MCF 10A (cell line): ENCODE measurements at regions of chr7 and their contacts with region 1.

Region 1: DNA sequence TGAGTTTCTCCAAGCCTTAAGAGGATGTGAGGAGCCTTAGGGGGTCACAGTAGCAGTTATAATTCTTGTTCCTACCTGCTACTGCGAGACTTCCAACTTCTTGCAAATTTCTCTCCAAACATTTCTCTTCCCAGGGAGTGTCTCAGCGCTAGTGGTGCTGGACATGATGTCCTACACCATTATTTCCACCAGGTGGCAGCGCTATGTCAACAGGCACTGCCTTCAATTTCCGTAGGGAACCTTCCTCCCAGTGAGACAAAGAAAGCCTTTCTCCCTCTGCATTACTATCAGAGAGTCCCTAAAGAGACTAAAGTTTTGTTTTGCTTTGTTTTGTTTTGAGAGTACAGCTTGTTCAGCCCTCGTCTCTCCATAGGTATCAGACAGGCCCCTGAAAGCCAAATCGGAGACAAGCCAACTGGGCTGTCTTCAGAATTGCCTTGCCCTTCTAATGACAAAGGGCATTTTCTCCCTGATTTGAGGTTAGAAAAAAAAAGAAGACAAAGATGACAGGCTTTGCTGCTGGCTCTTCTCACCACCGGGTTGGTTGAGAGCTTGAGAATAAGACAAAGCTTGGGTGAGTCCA is 44.2 kb upstream of the GGCT start:
- DNase-seq: peak; percentile 84
- H3K4me3 Mint-ChIP-seq: no peak overlapping the region
- H3K27ac Mint-ChIP-seq: peak overlapping the region; percentile 92
- H3K4me1 Mint-ChIP-seq: peaks cover 32% of the 10 kb centered on the region
- H3K27me3 Mint-ChIP-seq: no peaks in the 10 kb centered on the region
- CTCF ChIP-seq: peak; percentile 78

Region 2: GRCh38 chr7:30478349-30479201 is 70.3 kb before region 1 on chr7 and contains the start of gene NOD1:
- CTCF ChIA-PET with region 1: interaction called, 3 read pairs
- POLR2A ChIA-PET with region 1: interaction called, 12 read pairs
- intact Hi-C with region 1: no loop called
- DNase-seq: peak; percentile 73
- H3K4me3 Mint-ChIP-seq: peak within 1 kb of the TSS; percentile 86
- H3K27ac Mint-ChIP-seq: peak within 1 kb of the TSS; percentile 77
- H3K4me1 Mint-ChIP-seq: peaks cover 6% of the 10 kb centered on the region
- H3K27me3 Mint-ChIP-seq: no peaks in the 10 kb centered on the region
- CTCF ChIP-seq: no peak
- total RNA-seq, gene NOD1: 3.8 and 4.8 TPM in 2 replicates

Region 3: GRCh38 chr7:30504347-30505173 is 44.3 kb before region 1 on chr7 and contains the start of gene GGCT:
- CTCF ChIA-PET with region 1: interaction called, 71 read pairs
- POLR2A ChIA-PET with region 1: interaction called, 12 read pairs
- intact Hi-C with region 1: no loop called
- DNase-seq: peak; percentile 99
- H3K4me3 Mint-ChIP-seq: peak within 1 kb of the TSS; percentile 83
- H3K27ac Mint-ChIP-seq: peak within 1 kb of the TSS; percentile 77
- H3K4me1 Mint-ChIP-seq: peaks cover 30% of the 10 kb centered on the region
- H3K27me3 Mint-ChIP-seq: no peaks in the 10 kb centered on the region
- CTCF ChIP-seq: no peak
- total RNA-seq, gene GGCT: 48.3 and 64.8 TPM in 2 replicates

Region 4: DNA sequence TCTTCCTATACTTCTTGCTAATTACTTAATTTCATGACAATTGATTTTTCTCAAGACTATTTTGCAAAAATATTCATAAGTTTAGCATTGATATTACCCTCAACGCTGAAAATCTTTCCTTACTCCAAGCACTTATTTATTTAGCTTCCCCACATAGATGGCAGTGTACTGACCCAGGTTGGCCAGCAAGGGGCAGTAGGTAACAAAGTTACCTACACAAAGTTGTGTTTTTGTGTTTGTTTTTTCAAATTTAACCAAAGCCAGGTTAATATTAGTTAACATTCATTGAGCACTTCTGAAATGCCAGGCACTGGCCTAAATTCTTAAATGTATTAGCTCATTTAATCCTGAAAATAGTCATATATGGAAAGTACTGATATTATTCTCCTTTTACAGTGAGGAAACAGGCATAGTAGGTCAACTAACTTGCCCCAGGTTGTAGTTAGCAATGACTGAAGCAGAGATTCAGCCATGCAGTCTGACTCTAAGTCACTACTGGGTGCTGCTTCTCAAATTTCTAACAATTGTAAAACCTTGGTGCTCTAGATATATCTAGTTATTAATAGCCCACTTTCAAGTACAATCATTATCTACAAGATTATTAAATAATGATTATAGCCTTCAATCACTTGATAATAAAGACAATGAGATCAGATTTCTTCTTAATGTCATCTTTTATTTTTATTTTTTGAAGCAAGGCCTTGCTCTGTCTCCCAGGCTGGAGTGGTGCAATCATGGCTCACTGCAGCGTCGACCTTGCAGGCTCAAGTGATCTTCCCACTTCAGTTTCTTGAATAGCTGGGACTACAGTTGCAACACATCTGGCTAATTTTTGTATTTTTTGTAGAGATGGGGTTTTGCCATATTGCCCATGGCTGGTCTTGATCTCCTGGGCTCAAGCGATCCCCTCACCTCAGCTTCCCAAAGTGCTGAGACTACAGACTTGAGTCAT is 38.5 kb before region 1 on chr7:
- CTCF ChIA-PET with region 1: interaction called, 71 read pairs
- POLR2A ChIA-PET with region 1: interaction called, 12 read pairs
- intact Hi-C with region 1: loop called (anchors 1 kb)
- DNase-seq: peak; percentile 58
- H3K4me3 Mint-ChIP-seq: no peak overlapping the region
- H3K27ac Mint-ChIP-seq: no peak overlapping the region
- H3K4me1 Mint-ChIP-seq: no peaks in the 10 kb centered on the region
- H3K27me3 Mint-ChIP-seq: no peaks in the 10 kb centered on the region
- CTCF ChIP-seq: peak; percentile 86

Region 5: DNA sequence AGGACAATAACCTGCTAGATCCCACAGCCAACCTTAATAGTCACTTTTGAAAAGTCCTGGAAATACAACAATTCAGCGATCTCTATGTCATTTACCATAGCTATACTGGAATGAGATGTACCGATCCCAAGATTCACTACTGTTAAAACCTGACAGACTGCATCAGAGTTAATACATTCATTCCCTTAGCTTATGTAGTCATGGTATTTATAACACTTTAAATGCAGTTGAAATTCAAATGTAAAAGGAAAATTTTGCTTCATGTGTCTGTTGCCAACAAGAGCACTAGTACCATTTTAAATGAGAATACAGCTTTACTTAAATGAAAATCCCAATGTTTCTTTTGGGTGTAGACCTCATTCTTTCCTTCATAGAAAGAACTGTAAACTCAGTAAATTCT is 33.1 kb before region 1 on chr7:
- CTCF ChIA-PET with region 1: interaction called, 71 read pairs
- POLR2A ChIA-PET with region 1: interaction called, 4 read pairs
- intact Hi-C with region 1: loop called (anchors 1 kb)
- DNase-seq: no peak
- H3K4me3 Mint-ChIP-seq: no peak overlapping the region
- H3K27ac Mint-ChIP-seq: no peak overlapping the region
- H3K4me1 Mint-ChIP-seq: peaks cover 4% of the 10 kb centered on the region
- H3K27me3 Mint-ChIP-seq: no peaks in the 10 kb centered on the region
- CTCF ChIP-seq: no peak

Region 6: GRCh38 chr7:30531286-30531685 is 17.6 kb before region 1 on chr7:
- CTCF ChIA-PET with region 1: interaction called, 12 read pairs
- POLR2A ChIA-PET with region 1: interaction called, 3 read pairs
- intact Hi-C with region 1: no loop called
- DNase-seq: peak; percentile 13
- H3K4me3 Mint-ChIP-seq: no peak overlapping the region
- H3K27ac Mint-ChIP-seq: no peak overlapping the region
- H3K4me1 Mint-ChIP-seq: peaks cover 5% of the 10 kb centered on the region
- H3K27me3 Mint-ChIP-seq: no peaks in the 10 kb centered on the region
- CTCF ChIP-seq: no peak

Region 7: DNA sequence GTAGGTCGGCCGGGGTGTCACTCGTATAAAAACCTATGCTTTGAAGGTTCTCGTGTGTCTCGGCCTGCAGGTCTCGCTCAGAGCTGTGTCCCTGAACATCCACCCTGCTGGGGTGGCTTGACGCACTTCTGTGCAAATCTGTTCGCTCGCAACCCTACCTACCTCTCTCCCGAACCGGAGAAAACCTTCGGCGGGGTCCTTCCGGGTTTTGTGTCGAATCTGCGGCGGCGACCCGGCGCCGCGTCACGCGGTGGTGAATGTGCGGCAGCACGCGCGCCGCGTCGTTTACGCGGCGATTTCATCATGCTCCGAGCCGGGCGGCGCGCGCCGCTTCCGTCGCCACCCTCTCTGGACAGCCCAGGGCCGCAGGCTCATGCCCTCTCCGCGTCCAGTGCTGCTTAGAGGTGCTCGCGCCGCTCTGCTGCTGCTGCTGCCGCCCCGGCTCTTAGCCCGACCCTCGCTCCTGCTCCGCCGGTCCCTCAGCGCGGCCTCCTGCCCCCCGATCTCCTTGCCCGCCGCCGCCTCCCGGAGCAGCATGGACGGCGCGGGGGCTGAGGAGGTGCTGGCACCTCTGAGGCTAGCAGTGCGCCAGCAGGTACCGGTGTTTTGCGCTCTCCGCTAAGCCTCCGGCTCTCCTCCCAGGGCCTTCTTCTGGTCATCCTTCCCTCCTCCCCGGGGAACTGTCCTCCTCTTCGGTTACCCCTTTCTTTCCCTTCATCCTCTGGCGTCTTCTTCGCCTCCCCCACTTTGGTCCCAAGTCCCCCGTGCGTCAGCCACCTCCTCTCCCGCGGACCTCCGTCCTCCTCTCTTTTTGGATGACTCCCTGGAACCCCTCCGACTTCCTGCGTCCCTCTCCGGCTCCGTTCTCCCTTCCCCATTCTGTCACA is 45.9 kb after region 1 on chr7 and contains the start of gene GARS1:
- CTCF ChIA-PET with region 1: interaction called, 5 read pairs
- POLR2A ChIA-PET with region 1: interaction called, 24 read pairs
- intact Hi-C with region 1: no loop called
- DNase-seq: peak; percentile 89
- H3K4me3 Mint-ChIP-seq: peak within 1 kb of the TSS; percentile 99
- H3K27ac Mint-ChIP-seq: peak within 1 kb of the TSS; percentile 99
- H3K4me1 Mint-ChIP-seq: peaks cover 13% of the 10 kb centered on the region
- H3K27me3 Mint-ChIP-seq: no peaks in the 10 kb centered on the region
- CTCF ChIP-seq: no peak
- total RNA-seq, gene GARS1: 325 and 386 TPM in 2 replicates